ENCODE measurements at regions of chr1 and their contacts with region 1.

Region 1: DNA sequence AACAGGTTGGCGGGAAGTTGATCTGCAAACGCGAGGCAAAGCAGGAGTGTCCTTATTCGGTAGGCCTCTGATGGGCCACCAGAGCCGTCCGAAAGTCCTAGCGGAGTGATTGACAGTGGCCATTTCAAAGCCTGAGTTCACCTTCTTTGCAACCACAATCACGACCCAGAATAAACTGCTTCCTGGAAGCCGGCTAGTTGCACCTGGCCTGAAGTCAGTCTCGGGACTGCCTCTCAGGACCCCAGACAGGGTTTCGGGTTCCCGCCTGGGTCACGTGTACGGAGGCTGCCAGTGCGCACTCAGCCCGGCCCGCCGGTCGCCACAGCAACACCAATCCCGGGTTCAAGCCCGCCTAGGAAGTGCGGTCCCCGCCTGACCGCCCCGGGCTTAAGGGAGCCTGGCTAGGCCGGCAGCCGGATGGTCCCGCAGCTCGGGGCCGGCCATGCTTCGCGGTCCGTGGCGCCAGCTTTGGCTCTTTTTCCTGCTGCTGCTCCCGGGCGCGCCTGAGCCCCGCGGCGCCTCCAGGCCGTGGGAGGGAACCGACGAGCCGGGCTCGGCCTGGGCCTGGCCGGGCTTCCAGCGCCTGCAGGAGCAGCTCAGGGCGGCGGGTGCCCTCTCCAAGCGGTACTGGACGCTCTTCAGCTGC is at the start of gene TOR3A:
- DNase-seq: peak; percentile 29
- H3K4me3 ChIP-seq: peak within 1 kb of the TSS; percentile 86
- CTCF ChIP-seq: no peak

Region 2: GRCh38 chr1:178844436-178844835 is 237.4 kb before region 1 on chr1:
- CTCF ChIA-PET with region 1: no interaction called
- POLR2A ChIA-PET with region 1: no interaction called
- DNase-seq: no peak
- H3K4me3 ChIP-seq: no peak overlapping the region
- CTCF ChIP-seq: no peak

Region 3: DNA sequence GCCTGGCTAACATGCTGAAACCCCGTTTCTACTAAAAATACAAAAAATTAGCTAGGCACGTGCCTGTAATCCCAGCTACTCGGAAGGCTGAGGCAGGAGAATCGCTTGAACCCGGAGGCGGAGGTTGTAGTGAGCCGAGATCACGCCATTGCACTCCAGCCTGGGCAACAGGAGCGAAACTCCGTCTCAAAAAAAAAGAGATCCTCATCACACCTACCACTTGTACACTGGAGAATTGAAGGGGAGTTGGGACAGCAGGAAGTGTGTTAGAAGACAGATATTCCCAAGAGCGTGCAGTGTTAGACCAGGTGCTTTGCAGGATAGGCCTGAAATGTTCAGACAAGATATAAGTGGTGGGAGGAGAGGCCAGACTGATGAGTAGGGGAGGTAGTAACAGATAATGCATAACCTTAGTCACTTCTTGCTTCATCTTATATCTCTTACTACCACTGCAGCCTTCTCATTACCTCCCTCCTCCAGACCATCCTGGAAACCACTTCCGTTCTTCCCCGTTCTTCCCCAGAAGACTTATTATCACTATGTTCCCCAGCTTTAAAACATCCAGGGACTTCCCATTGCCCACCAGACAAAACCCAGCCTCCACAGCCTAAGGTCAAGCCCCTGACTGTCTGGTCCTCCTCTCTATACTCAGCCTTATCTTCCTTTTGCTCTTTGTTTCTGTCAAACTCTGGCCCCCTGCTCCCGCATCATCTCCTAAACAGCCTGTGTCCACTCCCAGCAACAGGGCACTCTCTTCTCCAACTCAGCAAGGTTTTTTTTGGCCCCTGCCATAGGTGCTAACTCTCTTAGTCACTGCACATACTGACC is 34.8 kb before region 1 on chr1:
- CTCF ChIA-PET with region 1: interaction called, 10 read pairs
- POLR2A ChIA-PET with region 1: no interaction called
- DNase-seq: no peak
- H3K4me3 ChIP-seq: no peak overlapping the region
- CTCF ChIP-seq: no peak

Region 4: DNA sequence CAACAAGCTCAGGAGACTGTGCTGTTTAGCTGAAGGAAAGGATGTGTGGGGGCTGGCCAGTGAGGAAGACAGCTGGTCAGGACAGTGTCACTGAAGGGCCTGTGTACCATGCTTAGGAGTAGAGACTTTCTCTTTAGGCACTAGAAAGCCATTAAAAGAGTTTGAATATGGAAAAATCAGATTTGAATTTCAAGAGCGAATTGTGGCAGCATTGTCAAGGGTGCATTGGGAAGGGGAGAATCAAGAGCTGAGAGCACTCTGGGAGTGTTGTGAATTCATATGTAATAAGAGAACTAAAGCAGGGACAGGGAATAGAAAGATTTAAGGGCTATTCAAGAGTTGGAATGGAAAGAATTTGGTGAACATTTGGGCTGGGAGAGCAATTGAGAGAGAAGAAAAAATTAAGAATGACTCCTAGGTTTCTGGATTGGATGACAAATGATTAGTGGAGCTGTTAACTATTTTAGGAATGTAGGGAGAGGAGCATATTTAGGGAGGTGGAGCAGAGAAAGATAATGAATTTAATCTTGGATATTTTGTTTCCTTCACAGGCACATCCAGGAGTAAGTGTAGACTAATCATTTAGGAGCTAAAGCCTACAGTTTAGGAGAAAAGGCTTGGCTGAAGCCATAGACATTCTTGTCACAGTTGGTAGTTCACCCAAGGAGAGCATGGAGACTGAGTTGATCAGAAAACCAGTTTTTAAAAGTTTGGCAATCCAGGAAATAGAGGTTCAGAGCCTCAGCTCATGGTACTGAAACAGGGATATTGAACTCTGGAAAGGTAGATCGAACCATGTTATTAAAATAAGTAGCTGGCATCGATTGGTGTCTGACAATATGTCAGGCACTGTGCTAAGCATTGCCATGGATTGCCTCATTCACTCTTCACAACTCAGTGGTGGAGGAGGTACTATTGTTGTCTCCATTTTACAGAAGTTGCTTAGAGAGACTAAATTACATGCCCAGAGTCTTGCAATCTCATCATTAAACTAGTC is 23.0 kb before region 1 on chr1:
- CTCF ChIA-PET with region 1: interaction called, 21 read pairs
- POLR2A ChIA-PET with region 1: interaction called, 3 read pairs
- DNase-seq: peak; percentile 29
- H3K4me3 ChIP-seq: no peak overlapping the region
- CTCF ChIP-seq: no peak

Region 5: DNA sequence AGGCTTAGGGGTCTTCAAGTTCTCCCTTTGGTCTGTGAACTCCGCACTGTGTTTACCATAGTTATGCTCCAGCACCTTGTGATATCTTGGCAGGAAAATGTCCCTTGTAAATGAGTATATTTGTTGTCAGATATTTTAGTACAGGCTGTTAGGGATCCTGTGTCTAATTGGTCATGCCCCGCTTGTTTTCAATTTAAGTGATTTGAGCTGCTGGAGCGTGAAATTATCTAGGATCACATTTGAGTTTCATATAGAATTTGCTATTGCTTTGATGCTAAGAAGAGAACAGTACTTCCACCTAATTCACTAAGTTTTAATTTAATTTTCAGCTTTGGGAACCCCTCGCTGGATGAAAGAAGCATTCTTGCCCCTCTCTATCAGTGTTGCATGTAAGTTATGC is 15.3 kb before region 1 on chr1:
- CTCF ChIA-PET with region 1: interaction called, 21 read pairs
- POLR2A ChIA-PET with region 1: no interaction called
- DNase-seq: no peak
- H3K4me3 ChIP-seq: no peak overlapping the region
- CTCF ChIP-seq: no peak

Region 6: DNA sequence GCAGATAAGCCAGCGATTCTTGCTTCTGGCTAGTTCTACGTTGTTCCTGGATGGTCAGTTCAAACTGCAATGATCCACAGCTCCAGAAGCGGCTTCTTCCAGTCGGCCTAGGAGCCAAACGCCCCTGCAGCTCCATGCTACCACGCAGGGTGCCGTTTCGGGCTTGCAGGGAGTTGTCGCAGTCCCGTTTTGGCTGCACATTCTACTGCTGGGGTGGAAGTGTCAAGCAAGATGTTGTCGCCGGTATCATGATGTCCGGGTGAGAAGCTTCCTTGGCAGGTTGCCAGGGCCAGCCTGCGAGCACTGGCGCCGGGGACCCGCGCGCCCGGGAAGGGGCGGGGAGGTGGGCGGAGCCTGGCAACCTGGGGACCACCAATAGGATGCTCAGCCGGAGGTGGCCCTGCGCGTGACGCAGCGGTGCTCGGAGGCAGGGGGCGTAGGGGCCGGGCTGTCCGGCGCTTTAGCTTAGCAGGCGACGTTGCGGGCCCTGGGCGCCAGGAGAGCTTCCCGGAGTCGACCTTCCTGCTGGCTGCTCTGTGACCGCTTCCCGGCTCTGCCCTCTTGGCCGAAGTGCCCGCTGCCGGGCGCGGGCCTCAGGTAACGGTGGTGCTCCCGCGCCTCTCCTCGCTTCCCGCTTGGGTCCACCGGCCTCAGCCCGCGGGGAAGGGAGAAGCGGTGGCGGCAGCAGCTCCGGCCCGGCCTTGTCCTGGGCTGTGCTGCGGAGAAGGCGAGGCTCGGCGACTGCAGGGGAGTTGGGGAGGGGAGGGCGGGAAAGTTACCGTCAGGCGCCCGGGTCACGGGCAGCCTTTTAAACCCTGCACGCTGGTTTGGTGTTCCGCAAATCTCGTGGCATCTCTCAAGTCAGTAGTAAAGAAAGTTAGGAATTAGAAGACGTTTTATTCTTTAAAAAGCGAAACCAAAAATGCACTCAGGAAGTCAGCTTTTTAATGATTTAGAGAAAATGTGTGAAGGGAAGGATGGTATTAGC is 211.8 kb after region 1 on chr1 and contains the start of gene SOAT1:
- CTCF ChIA-PET with region 1: interaction called, 16 read pairs
- POLR2A ChIA-PET with region 1: interaction called, 7 read pairs
- DNase-seq: peak; percentile 37
- H3K4me3 ChIP-seq: peak within 1 kb of the TSS; percentile 84
- CTCF ChIP-seq: peak; percentile 58

Region 7: GRCh38 chr1:179365320-179366092 is 283.7 kb after region 1 on chr1 and contains the start of gene AXDND1:
- CTCF ChIA-PET with region 1: interaction called, 76 read pairs
- POLR2A ChIA-PET with region 1: no interaction called
- DNase-seq: no peak
- H3K4me3 ChIP-seq: peak within 1 kb of the TSS; percentile 84
- CTCF ChIP-seq: no peak

Measured in AG04449 (cell line).